GM12878 (cell line): ENCODE measurements at regions of chr6 and their contacts with region 1.

Region 1: GRCh38 chr6:139375232-139376016 is 976 bp upstream of the CITED2 start:
- DNase-seq: peak; percentile 65
- ATAC-seq: peak; percentile 69
- H3K4me3 ChIP-seq: peak overlapping the region; percentile 93
- H3K27ac ChIP-seq: peak overlapping the region; percentile 81
- H3K4me1 ChIP-seq: no peaks in the 10 kb centered on the region
- H3K27me3 ChIP-seq: no peaks in the 10 kb centered on the region
- CTCF ChIP-seq: no peak
- EP300 ChIP-seq: 0 out of 4 replicates have a peak, but pooled peaks of 1 of the 2 experiments have one; percentile 52
- POLR2A ChIP-seq: peak; percentile 69; the same call in 1 of the 2 replicates
- RAD21 ChIP-seq: peak; percentile 33

Region 2: GRCh38 chr6:139219271-139219729 is 156.1 kb before region 1 on chr6:
- CTCF ChIA-PET with region 1: interaction called, 100 read pairs
- POLR2A ChIA-PET with region 1: interaction called, 5 read pairs
- RAD21 ChIA-PET with region 1: interaction called, 107 read pairs
- SMC1A ChIA-PET with region 1: interaction called, 90 read pairs
- in situ Hi-C with region 1: no loop called
- intact Hi-C with region 1: no loop called
- DNase-seq: peak; percentile 82
- ATAC-seq: peak; percentile 100
- H3K4me3 ChIP-seq: no peak overlapping the region
- H3K27ac ChIP-seq: peak overlapping the region; percentile 20; the same call in 1 of the 2 replicates
- H3K4me1 ChIP-seq: peaks cover 3% of the 10 kb centered on the region; the same call in 1 of the 2 replicates
- H3K27me3 ChIP-seq: no peaks in the 10 kb centered on the region
- CTCF ChIP-seq: peak; percentile 88 to 99 (median 93); a peak in 5 of 6 replicates
- EP300 ChIP-seq: peak in 1 of 2 experiments; percentile 25; a peak in 1 of 4 replicates
- POLR2A ChIP-seq: peak; percentile 44; the same call in 1 of the 2 replicates
- RAD21 ChIP-seq: peak; percentile 99

Region 3: DNA sequence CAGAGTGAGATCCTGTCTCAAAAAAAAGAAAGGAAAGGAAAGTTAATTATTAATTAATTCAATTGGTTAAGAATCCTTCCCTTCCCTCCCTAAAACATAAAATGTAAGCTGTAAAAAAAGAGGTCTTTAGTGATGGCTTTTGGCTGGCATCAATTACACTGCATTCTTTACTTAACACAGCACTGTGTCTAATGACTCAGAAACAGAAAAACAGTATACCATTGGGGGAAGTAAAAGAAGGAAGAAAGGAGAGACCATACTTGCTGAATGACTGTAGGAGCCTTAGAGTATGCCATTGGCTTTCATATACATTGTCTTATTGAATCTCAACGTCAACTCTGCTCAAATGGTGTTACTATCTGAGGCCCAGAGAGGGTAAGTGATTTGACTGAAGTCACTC is 17.4 kb after region 1 on chr6:
- CTCF ChIA-PET with region 1: interaction called, 3 read pairs
- POLR2A ChIA-PET with region 1: no interaction called
- RAD21 ChIA-PET with region 1: interaction called, 12 read pairs
- SMC1A ChIA-PET with region 1: interaction called, 18 read pairs
- in situ Hi-C with region 1: no loop called
- intact Hi-C with region 1: no loop called
- DNase-seq: peak; percentile 38
- ATAC-seq: peak; percentile 98
- H3K4me3 ChIP-seq: no peak overlapping the region
- H3K27ac ChIP-seq: no peak overlapping the region
- H3K4me1 ChIP-seq: no peaks in the 10 kb centered on the region
- H3K27me3 ChIP-seq: no peaks in the 10 kb centered on the region
- CTCF ChIP-seq: no peak
- EP300 ChIP-seq: peak in 1 of 2 experiments; percentile 86; a peak in 1 of 4 replicates
- POLR2A ChIP-seq: no peak
- RAD21 ChIP-seq: no peak

Region 4: DNA sequence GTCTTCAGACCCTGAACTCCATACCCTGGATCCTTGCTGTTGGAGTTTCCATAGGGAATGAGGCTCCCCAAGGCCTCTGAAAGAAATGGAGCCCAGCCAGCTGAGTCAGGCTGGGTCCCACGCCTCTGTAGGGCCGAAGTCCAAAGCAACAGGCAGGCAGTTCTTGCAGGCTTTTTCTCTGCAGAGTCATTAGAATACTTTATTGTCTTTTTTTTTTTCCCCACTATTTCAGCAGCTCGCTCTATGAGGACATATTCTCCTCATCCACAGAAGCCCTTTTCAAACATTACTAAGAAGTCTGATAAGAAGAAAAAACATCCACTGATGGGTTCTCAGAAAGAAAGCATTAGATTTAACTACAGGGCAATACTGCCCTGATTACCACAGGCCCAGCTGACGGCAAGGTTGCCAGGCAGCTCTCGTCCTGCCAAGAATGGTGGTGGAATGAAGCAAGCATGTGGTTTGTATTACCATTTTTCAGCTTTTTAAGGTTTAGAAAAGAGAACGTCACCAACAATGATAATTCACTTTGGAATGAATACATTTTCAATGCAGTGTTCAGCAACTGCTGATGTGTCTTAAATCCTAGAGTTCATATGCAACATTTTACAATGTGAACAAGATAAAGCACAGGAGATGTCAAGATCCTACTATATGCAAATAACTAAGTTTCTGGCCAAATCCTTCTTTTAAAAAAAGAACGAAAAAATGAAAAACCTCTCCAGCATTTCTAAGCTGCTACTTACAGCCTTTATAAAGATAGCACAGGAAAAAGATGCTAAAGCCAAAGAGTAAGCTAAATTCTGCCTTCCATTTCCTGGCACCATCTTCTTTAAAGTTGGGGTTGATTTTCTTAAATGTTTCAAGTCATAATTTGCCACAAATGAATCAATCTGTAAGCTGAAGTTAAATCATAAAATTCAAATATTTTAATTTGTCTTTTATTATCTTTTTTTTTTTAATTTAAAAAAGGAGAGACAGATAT is 222.6 kb after region 1 on chr6:
- CTCF ChIA-PET with region 1: interaction called, 22 read pairs
- POLR2A ChIA-PET with region 1: interaction called, 3 read pairs
- RAD21 ChIA-PET with region 1: interaction called, 11 read pairs
- SMC1A ChIA-PET with region 1: interaction called, 13 read pairs
- in situ Hi-C with region 1: no loop called
- intact Hi-C with region 1: loop called (anchors 2 kb)
- DNase-seq: no peak
- ATAC-seq: no peak
- H3K4me3 ChIP-seq: no peak overlapping the region
- H3K27ac ChIP-seq: no peak overlapping the region
- H3K4me1 ChIP-seq: peaks cover 9% of the 10 kb centered on the region
- H3K27me3 ChIP-seq: no peaks in the 10 kb centered on the region
- CTCF ChIP-seq: no peak
- EP300 ChIP-seq: no peak
- POLR2A ChIP-seq: no peak
- RAD21 ChIP-seq: no peak

Region 5: GRCh38 chr6:139846538-139847456 is 471.4 kb after region 1 on chr6:
- CTCF ChIA-PET with region 1: no interaction called
- POLR2A ChIA-PET with region 1: no interaction called
- RAD21 ChIA-PET with region 1: interaction called, 11 read pairs
- SMC1A ChIA-PET with region 1: interaction called, 5 read pairs
- in situ Hi-C with region 1: no loop called
- intact Hi-C with region 1: loop called (anchors 10 kb)
- DNase-seq: no peak
- ATAC-seq: peak; percentile 48
- H3K4me3 ChIP-seq: no peak overlapping the region
- H3K27ac ChIP-seq: no peak overlapping the region
- H3K4me1 ChIP-seq: no peaks in the 10 kb centered on the region
- H3K27me3 ChIP-seq: no peaks in the 10 kb centered on the region
- CTCF ChIP-seq: no peak
- EP300 ChIP-seq: no peak
- POLR2A ChIP-seq: no peak
- RAD21 ChIP-seq: no peak

Region 6: DNA sequence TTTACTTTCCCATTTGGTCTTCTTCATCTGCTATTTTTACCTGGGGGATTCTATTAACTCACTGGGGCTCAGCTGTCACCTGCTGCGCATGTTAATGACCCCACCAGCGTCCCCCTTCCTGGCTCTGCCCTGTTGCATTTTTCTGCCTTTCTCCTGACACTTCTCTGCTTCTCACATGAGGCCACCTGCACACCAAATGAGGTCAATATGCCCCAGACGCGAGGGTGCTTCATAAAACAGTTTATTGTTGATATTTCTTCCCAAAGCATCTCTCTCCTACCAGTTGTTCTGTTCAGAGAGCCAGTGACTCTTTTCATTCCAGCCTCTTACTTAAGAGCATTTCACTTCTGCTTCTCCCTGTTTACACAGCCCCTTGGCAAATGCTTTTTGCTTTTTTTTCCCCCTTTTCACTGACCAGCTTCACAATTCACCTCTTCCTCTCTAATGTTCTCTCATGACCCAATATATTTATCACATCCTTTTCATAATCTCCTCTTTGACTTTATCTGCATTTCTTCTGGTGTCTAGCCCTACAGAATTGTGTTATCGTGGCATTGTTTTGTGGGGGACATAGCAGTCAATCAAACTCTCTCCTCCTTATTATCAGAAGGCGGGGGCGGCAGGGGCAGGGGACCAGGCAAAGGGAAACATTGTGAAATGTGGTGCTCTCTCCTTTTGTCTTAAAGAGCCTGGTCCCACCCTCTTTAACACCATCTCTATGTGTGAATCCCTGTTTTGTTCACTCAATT is 544.8 kb after region 1 on chr6:
- CTCF ChIA-PET with region 1: interaction called, 5 read pairs
- POLR2A ChIA-PET with region 1: no interaction called
- RAD21 ChIA-PET with region 1: interaction called, 12 read pairs
- SMC1A ChIA-PET with region 1: interaction called, 20 read pairs
- in situ Hi-C with region 1: loop called (anchors 5 kb)
- intact Hi-C with region 1: no loop called
- DNase-seq: no peak
- ATAC-seq: no peak; the same call in 2 of the 3 replicates
- H3K4me3 ChIP-seq: no peak overlapping the region
- H3K27ac ChIP-seq: no peak overlapping the region
- H3K4me1 ChIP-seq: peaks cover 3% of the 10 kb centered on the region; the same call in 1 of the 2 replicates
- H3K27me3 ChIP-seq: no peaks in the 10 kb centered on the region; a peak in 1 of 4 replicates
- CTCF ChIP-seq: no peak
- EP300 ChIP-seq: no peak
- POLR2A ChIP-seq: no peak
- RAD21 ChIP-seq: no peak

Region 7: GRCh38 chr6:140271759-140272377 is 896.4 kb after region 1 on chr6:
- CTCF ChIA-PET with region 1: no interaction called
- POLR2A ChIA-PET with region 1: no interaction called
- RAD21 ChIA-PET with region 1: interaction called, 6 read pairs
- SMC1A ChIA-PET with region 1: no interaction called
- in situ Hi-C with region 1: no loop called
- intact Hi-C with region 1: loop called (anchors 10 kb)
- DNase-seq: peak; percentile 36
- ATAC-seq: peak; percentile 94
- H3K4me3 ChIP-seq: no peak overlapping the region
- H3K27ac ChIP-seq: peak overlapping the region; percentile 58
- H3K4me1 ChIP-seq: peaks cover 4% of the 10 kb centered on the region; the same call in 1 of the 2 replicates
- H3K27me3 ChIP-seq: no peaks in the 10 kb centered on the region
- CTCF ChIP-seq: no peak
- EP300 ChIP-seq: peak; percentile 46 to 51; a peak in 2 of 4 replicates
- POLR2A ChIP-seq: no peak
- RAD21 ChIP-seq: 0 out of 2 replicates have a peak, but pooled peaks have one; percentile 8